GM10248 (cell line): ENCODE measurements at regions of chr19 and their contacts with region 1.

Region 1: DNA sequence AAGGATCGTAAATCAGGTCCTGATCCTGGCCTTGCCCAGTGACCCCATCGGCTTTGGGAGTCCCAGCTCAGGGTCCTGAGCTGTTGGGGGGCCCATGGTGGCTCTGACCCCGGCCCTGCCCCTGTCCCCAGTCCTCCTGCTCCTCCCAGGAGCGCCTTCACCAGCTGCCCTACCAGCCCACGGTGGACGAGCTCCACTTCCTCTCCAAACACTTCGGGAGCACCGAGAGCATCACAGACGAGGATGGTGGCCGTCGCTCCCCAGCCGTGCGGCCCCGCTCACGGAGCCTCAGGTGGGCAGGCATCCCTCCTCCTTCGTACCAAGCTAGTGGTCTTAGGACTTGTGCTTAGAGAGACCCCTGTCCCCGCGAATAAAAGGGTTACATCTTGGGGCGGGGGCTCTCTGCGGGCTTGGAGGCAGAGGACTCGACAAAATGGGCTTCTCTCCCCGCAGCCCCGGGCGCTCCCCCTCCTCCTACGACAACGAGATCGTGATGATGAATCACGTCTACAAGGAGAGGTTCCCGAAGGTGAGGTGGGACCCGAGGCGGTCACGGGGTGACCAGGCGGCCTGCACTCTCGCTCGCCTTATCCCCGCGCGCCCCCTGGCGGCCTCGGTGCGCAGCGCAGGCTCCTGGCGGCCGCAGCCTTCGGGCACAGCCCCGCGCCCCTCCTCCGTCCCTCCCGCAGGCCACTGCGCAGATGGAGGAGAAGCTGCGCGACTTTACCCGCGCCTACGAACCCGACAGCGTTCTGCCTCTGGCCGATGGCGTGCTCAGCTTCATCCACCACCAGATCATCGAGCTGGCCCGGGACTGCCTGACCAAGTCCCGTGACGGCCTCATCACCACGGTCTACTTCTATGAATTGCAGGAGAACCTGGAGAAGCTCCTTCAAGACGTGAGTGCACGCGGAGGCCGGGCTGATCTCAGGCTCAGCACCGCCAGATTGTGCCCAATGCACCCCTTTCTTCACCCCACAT is 9.1 kb downstream of the MAST1 start:
- DNase-seq: peak; percentile 93
- CTCF ChIP-seq: peak; percentile 99

Region 2: DNA sequence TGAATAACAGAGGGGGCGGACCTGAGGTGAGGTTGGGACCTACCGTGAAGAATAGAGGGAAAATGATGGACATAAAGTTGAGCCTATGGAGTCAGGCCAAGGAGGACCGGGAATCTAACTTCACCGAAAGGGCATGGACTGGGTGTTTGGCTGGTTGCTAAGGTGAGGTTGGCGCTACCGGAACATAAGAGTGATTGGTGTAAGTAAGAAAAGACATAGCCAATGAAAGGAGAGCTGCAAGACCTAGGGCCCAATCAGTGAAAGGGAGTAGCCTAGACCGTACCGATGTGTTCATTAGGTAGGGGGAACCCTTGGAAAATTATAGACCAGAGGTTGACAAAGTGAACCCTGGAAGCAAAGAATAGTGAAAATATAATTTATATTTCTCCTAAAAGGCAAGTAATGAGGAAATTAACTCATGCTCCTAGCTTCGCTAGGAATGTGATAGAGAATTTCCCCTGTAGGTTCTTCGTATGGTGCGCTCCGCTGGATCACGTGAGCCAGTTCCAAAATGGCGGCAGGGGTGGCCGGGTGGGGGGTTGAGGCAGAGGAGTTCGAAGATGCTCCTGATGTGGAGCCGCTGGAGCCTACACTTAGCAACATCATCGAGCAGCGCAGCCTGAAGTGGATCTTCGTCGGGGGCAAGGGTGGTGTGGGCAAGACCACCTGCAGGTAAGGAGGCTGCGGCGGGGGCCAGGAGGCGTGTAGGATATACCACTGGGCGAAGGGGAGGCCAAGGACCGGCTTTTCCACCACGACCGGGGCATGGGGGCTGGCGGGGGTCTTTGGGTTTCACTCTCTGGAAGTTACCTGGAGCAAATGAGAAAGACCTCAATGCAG is 110.2 kb before region 1 on chr19 and contains the start of gene GET3:
- CTCF ChIA-PET with region 1: interaction called, 13 read pairs
- POLR2A ChIA-PET with region 1: interaction called, 6 read pairs
- DNase-seq: peak; percentile 91
- CTCF ChIP-seq: no peak

Region 3: DNA sequence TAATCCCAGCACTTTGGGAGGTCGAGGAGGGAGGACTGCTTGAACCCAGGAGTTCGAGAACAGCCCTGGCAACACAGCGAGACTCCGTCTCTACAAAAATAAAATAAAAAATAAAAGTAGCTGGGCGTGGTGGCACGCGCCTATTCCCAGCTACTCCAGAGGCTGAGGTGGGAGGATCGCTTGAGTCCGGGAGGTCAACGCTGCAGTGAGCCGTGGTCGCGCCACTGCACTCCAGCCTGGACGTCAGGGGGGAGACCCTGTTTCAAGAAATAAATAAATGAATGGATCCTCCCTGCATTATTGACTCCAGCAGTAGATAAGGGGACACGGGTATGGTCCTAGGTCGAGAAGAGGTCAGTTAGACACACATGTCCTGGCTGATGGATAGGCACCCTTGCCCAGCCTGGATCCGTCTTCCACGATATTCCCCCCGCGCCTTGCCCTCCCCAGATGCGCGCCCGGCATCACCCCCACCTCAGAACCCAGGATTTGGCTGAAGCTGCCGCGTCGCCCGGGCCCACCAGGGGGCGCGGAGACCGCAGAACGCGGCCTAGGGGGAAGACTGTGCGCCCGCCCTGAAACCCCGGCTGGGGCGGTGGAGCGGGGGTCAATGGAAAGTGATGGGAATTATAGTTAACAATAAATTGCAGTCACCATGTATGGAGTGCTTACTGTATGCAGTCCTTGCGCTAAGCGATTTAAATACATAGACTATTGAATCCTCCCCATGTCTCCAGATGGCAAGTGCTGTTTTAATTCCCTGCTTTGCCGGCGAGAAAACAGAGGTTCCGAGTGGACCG is 70.0 kb before region 1 on chr19:
- CTCF ChIA-PET with region 1: interaction called, 54 read pairs
- POLR2A ChIA-PET with region 1: no interaction called
- DNase-seq: peak; percentile 75
- CTCF ChIP-seq: peak; percentile 94

Region 4: GRCh38 chr19:12815088-12815487 is 32.4 kb before region 1 on chr19:
- CTCF ChIA-PET with region 1: interaction called, 50 read pairs
- POLR2A ChIA-PET with region 1: no interaction called
- DNase-seq: no peak
- CTCF ChIP-seq: no peak

Region 5: GRCh38 chr19:12859546-12859945 is 12.1 kb after region 1 on chr19:
- CTCF ChIA-PET with region 1: interaction called, 46 read pairs
- POLR2A ChIA-PET with region 1: no interaction called
- DNase-seq: no peak
- CTCF ChIP-seq: no peak

Region 6: DNA sequence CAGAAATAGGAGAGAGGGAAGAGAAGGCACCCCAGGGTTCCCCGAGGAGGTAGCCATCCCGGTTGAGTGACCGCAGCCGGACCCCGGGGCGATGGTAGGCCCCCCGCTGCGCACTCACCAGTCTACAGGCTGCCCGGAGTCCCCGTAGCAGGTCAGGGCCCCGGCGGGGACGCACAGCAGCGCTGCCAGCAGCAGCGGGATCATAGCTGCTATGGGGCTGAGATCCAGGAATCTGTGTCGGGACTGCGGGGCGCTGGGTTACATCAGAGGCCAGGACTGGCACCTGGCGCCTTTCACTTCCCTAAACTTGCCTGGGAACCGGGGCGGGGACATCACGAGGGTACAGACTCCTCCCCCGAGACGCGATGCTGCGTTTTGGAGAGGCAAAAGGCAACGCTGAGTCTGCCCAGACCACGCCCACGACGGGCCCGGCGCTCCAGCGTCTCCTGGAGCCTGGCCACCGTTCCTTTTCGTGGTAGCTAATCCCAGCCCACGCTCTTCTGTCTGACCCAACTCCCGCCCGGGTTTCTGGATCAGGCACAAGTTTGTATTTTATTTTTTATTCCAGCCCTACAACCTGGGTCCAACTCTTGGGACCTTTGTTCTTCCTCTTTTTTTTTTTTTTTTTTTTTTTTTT is 33.8 kb after region 1 on chr19 and contains the start of gene DNASE2:
- CTCF ChIA-PET with region 1: interaction called, 36 read pairs
- POLR2A ChIA-PET with region 1: no interaction called
- DNase-seq: peak; percentile 97
- CTCF ChIP-seq: no peak

Region 7: DNA sequence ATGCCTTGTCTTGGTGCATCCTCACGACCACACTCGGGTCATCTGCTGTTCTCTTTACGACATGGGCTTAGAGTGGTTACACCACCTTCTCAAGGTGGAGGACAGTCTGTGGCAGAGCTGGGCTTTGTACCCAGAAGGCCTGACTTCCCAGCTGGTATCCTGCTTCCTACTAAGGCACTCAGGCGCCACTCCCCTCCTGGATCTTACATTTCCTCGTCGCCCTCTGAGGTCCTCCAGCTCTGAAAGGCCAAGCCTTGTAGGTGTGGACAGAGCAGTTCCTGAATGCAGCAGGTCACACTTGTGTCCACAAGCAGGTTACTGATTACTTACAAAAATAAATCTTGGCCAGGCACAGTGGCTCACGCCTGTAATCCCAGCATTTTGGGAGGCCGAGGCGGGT is 59.7 kb after region 1 on chr19:
- CTCF ChIA-PET with region 1: interaction called, 11 read pairs
- POLR2A ChIA-PET with region 1: interaction called, 4 read pairs
- DNase-seq: no peak
- CTCF ChIP-seq: no peak

Region 8: DNA sequence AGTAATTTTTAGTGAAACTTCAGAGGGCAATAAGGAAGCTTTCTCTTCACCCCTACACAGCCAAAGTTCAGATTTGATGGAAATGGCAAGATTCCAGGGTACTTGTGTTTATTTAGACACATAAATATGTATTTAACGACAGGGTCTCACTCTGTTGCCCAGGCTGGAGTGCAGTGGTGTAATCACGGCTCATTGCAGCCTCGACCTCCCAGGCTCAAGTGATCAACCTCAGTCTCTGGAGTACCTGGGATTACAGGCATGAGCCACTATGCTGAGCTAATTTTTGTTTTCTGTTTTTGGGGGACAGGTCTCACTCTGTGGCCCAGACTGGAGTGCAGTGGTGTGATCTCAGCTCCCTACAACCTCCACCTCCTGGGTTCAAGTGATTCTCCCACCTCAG is 73.6 kb after region 1 on chr19:
- CTCF ChIA-PET with region 1: no interaction called
- POLR2A ChIA-PET with region 1: no interaction called
- DNase-seq: no peak
- CTCF ChIP-seq: no peak